CD8-positive, alpha-beta memory T cell (primary cell): ENCODE measurements at regions of chr16 and their contacts with region 1.

Region 1: GRCh38 chr16:28309811-28310311 is 17.5 kb downstream of the SBK1 start:
- DNase-seq: peak; percentile 77 to 95 (median 93)
- H3K4me3 ChIP-seq: peak overlapping the region; percentile 44
- H3K4me3 Mint-ChIP-seq: peak overlapping the region; percentile 51 to 90 (median 67)
- H3K27ac ChIP-seq: peak overlapping the region; percentile 36
- H3K27ac Mint-ChIP-seq: peak overlapping the region; percentile 94 to 98 (median 96)
- H3K4me1 ChIP-seq: peaks cover 59% of the 10 kb centered on the region
- H3K4me1 Mint-ChIP-seq: peaks cover 67 to 85% (median 70%) of the 10 kb centered on the region in 3 donors
- H3K27me3 ChIP-seq: no peaks in the 10 kb centered on the region
- H3K27me3 Mint-ChIP-seq: no peaks in the 10 kb centered on the region

Region 2: DNA sequence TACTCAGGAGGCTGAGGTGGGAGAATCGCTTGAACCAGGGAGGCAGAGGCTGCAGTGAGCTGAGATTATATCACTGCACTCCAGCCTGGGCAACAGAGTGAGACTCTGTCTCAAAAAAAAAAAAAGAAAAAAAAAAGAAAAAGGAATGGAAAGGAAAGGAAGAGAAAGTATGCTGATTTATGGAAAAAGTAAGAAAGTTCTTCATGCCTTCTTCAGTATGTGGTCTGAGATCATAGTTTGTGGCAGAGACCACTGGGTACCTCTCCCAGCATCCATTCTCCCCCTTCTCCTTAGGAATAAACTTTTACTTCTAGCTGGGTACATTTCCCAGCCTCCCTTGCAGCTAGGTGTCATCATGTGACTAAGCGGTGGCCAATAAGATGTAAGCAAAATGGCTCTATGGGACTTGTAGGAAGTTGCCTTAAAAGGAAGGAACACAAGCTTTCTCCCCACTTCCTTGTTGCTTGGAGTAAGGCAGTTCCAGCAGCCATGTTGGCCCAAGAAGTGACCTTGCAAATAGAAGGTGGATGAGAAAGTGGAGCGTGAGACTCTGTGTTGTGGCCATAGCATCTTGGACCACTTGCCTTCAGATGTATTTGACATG is 72.0 kb before region 1 on chr16:
- CTCF ChIA-PET with region 1: no interaction called
- POLR2A ChIA-PET with region 1: no interaction called
- DNase-seq: no peak
- H3K4me3 ChIP-seq: no peak overlapping the region
- H3K4me3 Mint-ChIP-seq: no peak overlapping the region
- H3K27ac ChIP-seq: no peak overlapping the region
- H3K27ac Mint-ChIP-seq: peak overlapping the region in 1 of 8 donors; percentile 77
- H3K4me1 ChIP-seq: no peaks in the 10 kb centered on the region
- H3K4me1 Mint-ChIP-seq: no peaks in the 10 kb centered on the region
- H3K27me3 ChIP-seq: no peaks in the 10 kb centered on the region
- H3K27me3 Mint-ChIP-seq: peaks cover 4 to 9% of the 10 kb centered on the region in 2 donors

Region 3: DNA sequence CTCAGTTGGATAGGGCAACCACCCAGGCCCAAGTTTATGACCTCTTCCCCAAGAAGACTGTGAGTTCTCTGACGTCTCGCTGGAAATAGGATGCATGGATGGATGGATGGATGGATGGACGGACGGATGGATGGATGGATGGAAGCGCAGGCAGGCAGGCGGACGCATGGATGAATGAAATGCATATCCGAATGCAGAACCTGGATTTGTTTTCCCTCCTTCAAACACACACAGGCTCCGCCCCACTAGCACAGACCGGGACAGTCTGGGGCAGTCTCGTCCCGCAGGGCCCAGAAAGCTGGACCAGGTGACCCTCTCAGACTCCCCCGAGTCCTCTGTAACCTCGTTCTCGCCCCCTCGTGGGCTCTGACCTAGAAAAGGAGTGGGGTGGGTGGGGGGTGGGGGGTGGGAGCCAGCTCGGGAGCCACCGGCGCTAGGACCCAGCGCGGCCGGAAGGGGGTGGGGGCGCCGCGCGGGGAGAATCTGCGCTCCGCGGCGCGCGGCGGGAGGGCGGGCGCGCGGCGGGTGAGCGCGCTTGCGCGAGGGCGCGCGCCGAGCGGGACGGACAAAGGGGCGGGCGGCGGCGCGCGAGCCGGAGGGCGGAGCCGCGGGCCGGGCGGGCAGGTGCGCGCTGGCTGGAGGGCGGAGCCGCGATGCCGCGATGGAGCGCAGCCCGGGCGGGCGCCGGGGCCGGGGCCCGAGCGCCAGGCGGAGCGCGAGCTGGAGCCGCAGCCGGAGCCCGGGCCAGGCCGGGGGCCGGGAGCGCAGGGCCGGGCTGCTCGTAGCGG is 17.8 kb before region 1 on chr16 and contains the start of gene SBK1:
- CTCF ChIA-PET with region 1: interaction called, 4 read pairs
- POLR2A ChIA-PET with region 1: interaction called, 24 read pairs
- DNase-seq: peak; percentile 78 to 89 (median 87)
- H3K4me3 ChIP-seq: peak within 1 kb of the TSS; percentile 90
- H3K4me3 Mint-ChIP-seq: peak within 1 kb of the TSS; percentile 91 to 98 (median 96)
- H3K27ac ChIP-seq: peak within 1 kb of the TSS; percentile 64
- H3K27ac Mint-ChIP-seq: peak within 1 kb of the TSS; percentile 82 to 97 (median 94)
- H3K4me1 ChIP-seq: peaks cover 68% of the 10 kb centered on the region
- H3K4me1 Mint-ChIP-seq: peaks cover 61 to 72% (median 71%) of the 10 kb centered on the region in 3 donors
- H3K27me3 ChIP-seq: no peaks in the 10 kb centered on the region
- H3K27me3 Mint-ChIP-seq: no peaks in the 10 kb centered on the region
- total RNA-seq, gene SBK1: 3.9 to 4.1 TPM